Mammary epithelial cell (primary cell): ENCODE measurements at regions of chr20 and their contacts with region 1.

Region 1: GRCh38 chr20:63475206-63475605 is 2.8 kb upstream of the KCNQ2 start:
- DNase-seq: peak; percentile 34
- H3K4me3 ChIP-seq: no peak overlapping the region
- H3K27ac ChIP-seq: no peak overlapping the region
- H3K4me1 ChIP-seq: no peaks in the 10 kb centered on the region
- H3K27me3 ChIP-seq: peaks cover 33% of the 10 kb centered on the region
- CTCF ChIP-seq: no peak

Region 2: GRCh38 chr20:63096151-63096589 is 379.0 kb before region 1 on chr20:
- CTCF ChIA-PET with region 1: no interaction called
- dilution Hi-C with region 1: no loop called
- in situ Hi-C with region 1: no loop called
- intact Hi-C with region 1: no loop called
- DNase-seq: no peak
- H3K4me3 ChIP-seq: no peak overlapping the region
- H3K27ac ChIP-seq: no peak overlapping the region
- H3K4me1 ChIP-seq: no peaks in the 10 kb centered on the region
- H3K27me3 ChIP-seq: peaks cover 2% of the 10 kb centered on the region
- CTCF ChIP-seq: no peak

Region 3: GRCh38 chr20:63140514-63141433 is 334.4 kb before region 1 on chr20:
- CTCF ChIA-PET with region 1: no interaction called
- dilution Hi-C with region 1: loop called (anchors 5 kb)
- in situ Hi-C with region 1: no loop called
- intact Hi-C with region 1: no loop called
- DNase-seq: no peak
- H3K4me3 ChIP-seq: no peak overlapping the region
- H3K27ac ChIP-seq: no peak overlapping the region
- H3K4me1 ChIP-seq: no peaks in the 10 kb centered on the region
- H3K27me3 ChIP-seq: no peaks in the 10 kb centered on the region
- CTCF ChIP-seq: no peak

Region 4: GRCh38 chr20:63196768-63197470 is 278.3 kb before region 1 on chr20:
- CTCF ChIA-PET with region 1: no interaction called
- dilution Hi-C with region 1: loop called (anchors 5 kb)
- in situ Hi-C with region 1: no loop called
- intact Hi-C with region 1: no loop called
- DNase-seq: no peak
- H3K4me3 ChIP-seq: no peak overlapping the region
- H3K27ac ChIP-seq: no peak overlapping the region
- H3K4me1 ChIP-seq: peaks cover 9% of the 10 kb centered on the region
- H3K27me3 ChIP-seq: no peaks in the 10 kb centered on the region
- CTCF ChIP-seq: no peak

Region 5: DNA sequence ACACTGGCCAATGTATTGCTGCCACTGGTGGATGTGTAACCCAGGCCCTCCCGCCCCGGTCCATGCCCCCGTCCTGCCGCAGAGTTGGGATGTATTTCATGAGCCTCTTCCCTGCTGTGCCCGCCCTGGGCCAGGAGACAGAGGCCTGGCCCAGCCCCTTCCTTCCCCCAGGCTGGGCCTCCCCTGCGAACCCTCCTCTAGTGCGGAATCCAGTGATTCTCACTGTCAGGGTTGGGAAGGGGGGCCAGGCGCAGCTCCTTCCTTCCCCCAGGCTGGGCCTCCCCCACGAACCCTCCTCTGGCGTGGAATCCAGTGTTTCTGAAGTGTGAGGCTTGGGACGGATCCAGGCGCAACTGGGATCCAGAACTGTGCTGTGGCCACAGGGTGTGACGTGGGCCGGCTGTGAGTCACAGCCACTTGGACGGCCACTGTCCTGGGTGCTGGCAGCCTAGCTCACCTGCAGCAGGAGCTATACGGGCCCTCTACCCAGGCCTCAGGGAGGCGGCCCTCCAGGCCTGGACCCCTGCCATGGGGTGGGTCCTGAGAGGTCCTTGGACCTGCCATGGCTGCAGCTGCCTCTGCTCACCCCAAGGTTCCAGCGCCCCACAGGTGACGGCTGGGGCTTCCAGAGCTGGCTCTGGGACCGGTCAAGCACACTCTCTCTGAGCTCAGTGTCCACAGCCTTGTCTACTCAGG is 153.9 kb before region 1 on chr20:
- CTCF ChIA-PET with region 1: no interaction called
- dilution Hi-C with region 1: no loop called
- in situ Hi-C with region 1: no loop called
- intact Hi-C with region 1: no loop called
- DNase-seq: no peak
- H3K4me3 ChIP-seq: no peak overlapping the region
- H3K27ac ChIP-seq: no peak overlapping the region
- H3K4me1 ChIP-seq: no peaks in the 10 kb centered on the region
- H3K27me3 ChIP-seq: peaks cover 10% of the 10 kb centered on the region
- CTCF ChIP-seq: no peak

Region 6: DNA sequence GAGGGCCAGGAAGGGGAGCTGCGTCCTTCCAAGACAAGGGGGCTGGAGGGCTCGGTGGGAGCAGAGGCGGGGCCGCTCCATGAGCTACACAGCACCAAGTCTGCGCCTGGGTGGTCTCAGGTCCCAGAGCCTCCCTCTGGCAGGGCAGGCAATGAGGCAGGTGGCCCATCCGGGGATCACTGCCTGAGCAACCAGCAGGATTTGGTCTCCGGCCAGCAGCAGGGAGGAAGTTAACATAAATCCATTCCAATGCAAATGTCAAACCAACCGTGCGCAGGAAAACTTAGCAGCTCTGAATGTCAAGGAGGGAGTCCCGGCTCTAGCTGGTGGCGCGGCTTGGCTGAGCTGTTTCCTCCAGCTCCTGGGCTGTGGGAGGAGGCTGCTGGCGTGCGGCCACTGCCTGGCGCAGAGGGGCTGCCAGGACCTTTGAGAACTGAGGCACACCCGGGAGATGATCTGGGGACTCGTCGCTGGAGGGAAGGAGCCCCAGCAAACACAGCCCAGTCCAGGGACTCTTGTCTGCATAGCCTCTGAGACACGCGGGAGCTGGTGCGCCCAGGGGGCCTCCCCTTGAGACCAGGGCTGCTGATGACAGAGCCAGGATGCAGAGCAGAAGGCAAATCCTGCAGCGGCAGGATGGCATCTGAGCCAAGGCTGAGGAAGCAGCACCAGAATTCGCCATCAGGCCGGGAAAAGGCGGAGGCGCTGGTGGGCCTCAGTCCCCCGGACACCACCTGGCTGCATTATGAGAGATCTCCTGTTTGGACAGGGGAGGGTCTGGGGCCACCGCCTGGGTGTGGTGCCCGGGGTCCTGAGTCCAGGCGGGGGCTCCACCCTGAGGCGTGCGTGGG is 80.9 kb before region 1 on chr20:
- CTCF ChIA-PET with region 1: no interaction called
- dilution Hi-C with region 1: no loop called
- in situ Hi-C with region 1: no loop called
- intact Hi-C with region 1: no loop called
- DNase-seq: no peak
- H3K4me3 ChIP-seq: no peak overlapping the region
- H3K27ac ChIP-seq: no peak overlapping the region
- H3K4me1 ChIP-seq: no peaks in the 10 kb centered on the region
- H3K27me3 ChIP-seq: peaks cover 4% of the 10 kb centered on the region
- CTCF ChIP-seq: no peak

Region 7: DNA sequence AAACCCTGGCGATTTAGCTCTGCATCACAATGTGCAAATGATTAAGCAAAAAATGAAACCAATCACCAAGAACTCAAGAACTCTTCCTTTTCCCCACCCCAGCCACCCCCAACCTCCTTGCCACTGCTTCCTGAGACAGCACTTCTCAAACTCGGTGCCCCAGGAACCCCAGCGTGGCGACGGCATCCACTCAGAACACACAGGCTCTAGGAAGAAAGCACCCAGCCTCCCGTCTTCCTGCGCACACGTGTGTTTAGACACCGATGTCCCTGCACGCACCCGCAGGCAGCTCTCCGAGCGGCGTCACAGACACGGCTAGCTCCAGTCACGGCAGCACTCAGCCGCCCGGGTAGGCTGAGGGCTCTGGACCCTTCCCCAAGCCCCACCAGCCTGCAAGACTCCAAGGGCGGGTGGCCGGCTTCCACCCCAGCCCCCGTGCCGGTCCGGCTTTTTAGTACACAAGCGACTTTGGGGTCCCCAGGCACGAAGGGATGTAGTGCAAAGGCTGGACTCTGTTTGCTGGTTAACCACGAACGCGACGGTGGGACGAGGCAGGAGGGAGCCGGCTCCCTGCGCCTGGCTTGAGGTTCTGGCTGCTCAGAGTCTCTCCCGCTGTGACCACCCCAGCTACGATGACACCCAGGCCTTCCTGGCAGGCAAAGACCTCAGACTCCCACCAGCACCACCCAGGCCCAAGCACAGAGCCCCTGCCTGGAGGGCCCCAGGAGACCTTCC is 54.7 kb before region 1 on chr20:
- CTCF ChIA-PET with region 1: no interaction called
- dilution Hi-C with region 1: loop called (anchors 5 kb)
- in situ Hi-C with region 1: no loop called
- intact Hi-C with region 1: no loop called
- DNase-seq: no peak
- H3K4me3 ChIP-seq: no peak overlapping the region
- H3K27ac ChIP-seq: no peak overlapping the region
- H3K4me1 ChIP-seq: no peaks in the 10 kb centered on the region
- H3K27me3 ChIP-seq: peaks cover 26% of the 10 kb centered on the region
- CTCF ChIP-seq: no peak

Region 8: GRCh38 chr20:63508072-63508768 is 33.0 kb after region 1 on chr20:
- CTCF ChIA-PET with region 1: no interaction called
- dilution Hi-C with region 1: loop called (anchors 5 kb)
- in situ Hi-C with region 1: no loop called
- intact Hi-C with region 1: no loop called
- DNase-seq: no peak
- H3K4me3 ChIP-seq: no peak overlapping the region
- H3K27ac ChIP-seq: no peak overlapping the region
- H3K4me1 ChIP-seq: no peaks in the 10 kb centered on the region
- H3K27me3 ChIP-seq: peaks cover 2% of the 10 kb centered on the region
- CTCF ChIP-seq: no peak

Region 9: GRCh38 chr20:63767456-63767855 is 292.2 kb after region 1 on chr20:
- CTCF ChIA-PET with region 1: no interaction called
- dilution Hi-C with region 1: loop called (anchors 10 kb)
- in situ Hi-C with region 1: no loop called
- intact Hi-C with region 1: no loop called
- DNase-seq: no peak
- H3K4me3 ChIP-seq: no peak overlapping the region
- H3K27ac ChIP-seq: no peak overlapping the region
- H3K4me1 ChIP-seq: no peaks in the 10 kb centered on the region
- H3K27me3 ChIP-seq: no peaks in the 10 kb centered on the region
- CTCF ChIP-seq: no peak

Region 10: GRCh38 chr20:63864847-63865640 is 389.8 kb after region 1 on chr20 and contains the start of gene TPD52L2:
- CTCF ChIA-PET with region 1: no interaction called
- dilution Hi-C with region 1: no loop called
- in situ Hi-C with region 1: no loop called
- intact Hi-C with region 1: no loop called
- DNase-seq: peak; percentile 100
- H3K4me3 ChIP-seq: peak within 1 kb of the TSS; percentile 85 to 94 (median 92)
- H3K27ac ChIP-seq: peak within 1 kb of the TSS; percentile 95
- H3K4me1 ChIP-seq: peaks cover 12% of the 10 kb centered on the region
- H3K27me3 ChIP-seq: no peaks in the 10 kb centered on the region
- CTCF ChIP-seq: no peak
- total RNA-seq, gene TPD52L2: 122 to 150 TPM

Region 11: GRCh38 chr20:64151634-64152530 is 676.7 kb after region 1 on chr20:
- CTCF ChIA-PET with region 1: no interaction called
- dilution Hi-C with region 1: loop called (anchors 10 kb)
- in situ Hi-C with region 1: no loop called
- intact Hi-C with region 1: no loop called
- DNase-seq: peak; percentile 20
- H3K4me3 ChIP-seq: no peak overlapping the region
- H3K27ac ChIP-seq: no peak overlapping the region
- H3K4me1 ChIP-seq: no peaks in the 10 kb centered on the region
- H3K27me3 ChIP-seq: no peaks in the 10 kb centered on the region
- CTCF ChIP-seq: no peak